Right ventricle myocardium superior (tissue), 1 donor: ENCODE measurements at regions of chr1 and their contacts with region 1.

Region 1: GRCh38 chr1:28877132-28877781 is 37.1 kb upstream of the EPB41 start:
- DNase-seq: peak; percentile 78
- ATAC-seq: peak; percentile 89

Region 2: DNA sequence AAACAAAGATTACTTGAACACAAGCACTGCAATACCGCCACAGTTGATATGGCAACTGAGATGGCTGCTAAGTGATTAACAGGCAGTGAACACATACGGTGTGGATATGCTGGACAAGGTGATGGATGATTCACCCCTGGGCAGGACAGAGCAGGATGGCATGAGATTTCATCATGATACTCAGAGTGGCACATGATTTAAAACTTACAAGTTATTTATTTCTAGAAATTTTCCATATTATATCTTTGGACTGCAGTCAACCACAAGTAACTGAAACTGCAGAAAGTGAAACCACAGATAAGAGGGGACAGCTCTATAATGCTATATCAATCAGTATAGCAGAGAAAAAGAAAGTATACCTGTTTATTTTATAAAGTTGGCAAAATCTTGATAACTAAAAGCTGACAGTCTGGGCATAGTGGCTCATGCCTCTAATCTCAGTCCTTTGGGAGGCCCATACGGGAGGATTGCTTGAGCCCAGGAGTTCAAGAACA is 459.8 kb before region 1 on chr1:
- intact Hi-C with region 1: no loop called
- DNase-seq: no peak
- ATAC-seq: no peak

Region 3: GRCh38 chr1:28518000-28518744 is 359.1 kb before region 1 on chr1:
- intact Hi-C with region 1: loop called (anchors 5 kb)
- DNase-seq: peak; percentile 96
- ATAC-seq: peak; percentile 97

Region 4: GRCh38 chr1:28779751-28780408 is 97.4 kb before region 1 on chr1:
- intact Hi-C with region 1: loop called (anchors 2 kb)
- DNase-seq: no peak
- ATAC-seq: no peak

Region 5: GRCh38 chr1:29033829-29034466 is 156.7 kb after region 1 on chr1:
- intact Hi-C with region 1: loop called (anchors 2 kb)
- DNase-seq: no peak
- ATAC-seq: peak; percentile 65

Region 6: GRCh38 chr1:29202584-29203340 is 325.5 kb after region 1 on chr1:
- intact Hi-C with region 1: loop called (anchors 2 kb)
- DNase-seq: peak; percentile 96
- ATAC-seq: peak; percentile 96